ENCODE measurements at regions of chr11 and their contacts with region 1.

Region 1: GRCh38 chr11:43708776-43709175 is 28.2 kb downstream of the HSD17B12 start:
- DNase-seq: no peak
- ATAC-seq: peak in 2 of 4 donors; percentile 66 to 80
- H3K4me3 ChIP-seq: no peak overlapping the region
- H3K27ac ChIP-seq: no peak overlapping the region
- H3K4me1 ChIP-seq: no peaks in the 10 kb centered on the region
- H3K27me3 ChIP-seq: no peaks in the 10 kb centered on the region
- CTCF ChIP-seq: peak; percentile 48

Region 2: GRCh38 chr11:43557553-43558110 is 151.1 kb before region 1 on chr11:
- intact Hi-C with region 1: loop called in 1 of 2 experiments (anchors 10 kb)
- DNase-seq: no peak
- ATAC-seq: no peak
- H3K4me3 ChIP-seq: no peak overlapping the region
- H3K27ac ChIP-seq: no peak overlapping the region
- H3K4me1 ChIP-seq: peaks cover 5% of the 10 kb centered on the region
- H3K27me3 ChIP-seq: peaks cover 5 to 74% (median 23%) of the 10 kb centered on the region in 3 donors
- CTCF ChIP-seq: peak; percentile 19

Region 3: DNA sequence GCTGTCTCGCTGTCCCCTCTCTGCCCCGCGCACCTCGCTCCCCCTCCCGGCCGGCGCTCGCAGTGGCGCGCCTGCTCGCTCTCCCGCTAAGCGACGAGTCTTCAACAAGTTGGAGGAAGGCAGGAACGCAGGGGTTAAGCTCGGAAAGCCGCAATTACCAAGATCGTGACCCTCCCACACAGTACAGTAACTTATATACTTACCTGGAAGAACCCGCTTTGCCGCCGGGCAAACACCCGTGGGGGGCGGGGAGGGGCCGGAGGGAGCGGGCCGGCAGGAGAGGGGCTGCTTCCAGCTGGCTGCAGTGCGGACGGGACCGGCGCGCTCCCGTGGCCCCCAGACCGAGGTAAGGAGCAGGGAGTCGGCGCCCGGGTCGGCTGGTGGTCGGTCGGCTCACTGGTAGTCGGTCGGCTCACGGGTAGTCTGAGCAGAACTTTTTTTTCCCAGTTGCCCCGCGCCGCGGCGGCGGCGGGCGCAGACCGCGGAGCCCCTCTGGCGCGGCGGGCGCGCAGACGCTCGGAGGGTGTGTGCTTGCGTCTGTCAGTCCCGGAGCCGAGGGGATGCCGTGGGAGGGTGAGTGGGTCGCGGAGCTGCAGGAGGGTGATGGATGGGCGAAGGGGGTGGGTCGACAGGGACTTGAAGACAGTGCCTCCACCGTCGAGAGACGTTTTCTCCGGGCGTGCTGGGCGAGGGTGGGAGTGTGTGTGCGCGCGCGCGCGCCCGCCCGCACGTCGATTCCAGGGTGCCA is 129.4 kb before region 1 on chr11:
- intact Hi-C with region 1: loop called in 1 of 2 experiments (anchors 10 kb)
- DNase-seq: no peak
- ATAC-seq: peak; percentile 52 to 75 (median 52)
- H3K4me3 ChIP-seq: peak overlapping the region; percentile 75
- H3K27ac ChIP-seq: no peak overlapping the region
- H3K4me1 ChIP-seq: peaks cover 39% of the 10 kb centered on the region
- H3K27me3 ChIP-seq: peaks cover 4 to 98% (median 43%) of the 10 kb centered on the region in 3 donors
- CTCF ChIP-seq: peak; percentile 31

Measured in psoas muscle (tissue), 8 donors.